Aorta (tissue), 5 donors: ENCODE measurements at regions of chr18 and their contacts with region 1.

Region 1: DNA sequence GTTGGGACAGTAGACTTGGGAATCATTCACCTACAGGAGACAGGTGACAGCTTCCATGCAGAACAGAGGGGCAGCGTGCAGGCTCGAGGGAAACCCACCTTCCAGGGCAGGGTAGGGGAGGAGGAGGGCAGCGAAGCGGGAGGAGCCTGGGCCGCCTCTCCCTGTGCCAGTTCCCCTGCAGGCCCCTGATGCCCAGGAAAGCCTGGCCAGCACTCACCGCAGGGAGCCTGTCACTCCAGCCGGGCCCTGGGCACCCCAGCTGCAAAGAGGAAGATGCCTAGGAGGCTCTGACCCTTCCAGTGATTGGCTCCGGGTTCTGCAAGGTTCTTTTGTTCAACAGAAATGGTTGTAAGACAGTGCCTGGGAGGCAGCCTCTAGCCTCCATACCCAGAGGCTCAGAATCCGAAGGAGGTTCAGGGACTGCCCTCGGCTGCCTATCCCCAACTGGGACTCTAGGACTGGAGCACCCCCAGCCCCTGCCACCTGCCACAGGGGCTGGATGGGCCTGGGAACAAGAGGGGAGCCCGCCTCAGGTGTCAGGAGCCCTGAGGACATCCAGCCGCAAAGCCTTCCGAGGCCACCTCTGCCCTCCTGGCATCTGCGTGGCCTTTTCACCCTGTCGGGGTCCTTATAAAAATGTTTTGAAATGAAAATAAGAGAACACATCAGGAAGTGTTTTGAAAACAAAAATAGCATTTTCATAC is 103.2 kb downstream of the PTGR3 start:
- DNase-seq: no peak
- ATAC-seq: no peak
- H3K4me3 ChIP-seq: no peak overlapping the region
- H3K27ac ChIP-seq: no peak overlapping the region
- H3K4me1 ChIP-seq: no peaks in the 10 kb centered on the region
- H3K27me3 ChIP-seq: no peaks in the 10 kb centered on the region

Region 2: GRCh38 chr18:75125382-75126331 is 20.0 kb after region 1 on chr18:
- intact Hi-C with region 1: no loop called
- DNase-seq: no peak
- ATAC-seq: peak; percentile 23
- H3K4me3 ChIP-seq: no peak overlapping the region
- H3K27ac ChIP-seq: no peak overlapping the region
- H3K4me1 ChIP-seq: no peaks in the 10 kb centered on the region
- H3K27me3 ChIP-seq: no peaks in the 10 kb centered on the region

Region 3: DNA sequence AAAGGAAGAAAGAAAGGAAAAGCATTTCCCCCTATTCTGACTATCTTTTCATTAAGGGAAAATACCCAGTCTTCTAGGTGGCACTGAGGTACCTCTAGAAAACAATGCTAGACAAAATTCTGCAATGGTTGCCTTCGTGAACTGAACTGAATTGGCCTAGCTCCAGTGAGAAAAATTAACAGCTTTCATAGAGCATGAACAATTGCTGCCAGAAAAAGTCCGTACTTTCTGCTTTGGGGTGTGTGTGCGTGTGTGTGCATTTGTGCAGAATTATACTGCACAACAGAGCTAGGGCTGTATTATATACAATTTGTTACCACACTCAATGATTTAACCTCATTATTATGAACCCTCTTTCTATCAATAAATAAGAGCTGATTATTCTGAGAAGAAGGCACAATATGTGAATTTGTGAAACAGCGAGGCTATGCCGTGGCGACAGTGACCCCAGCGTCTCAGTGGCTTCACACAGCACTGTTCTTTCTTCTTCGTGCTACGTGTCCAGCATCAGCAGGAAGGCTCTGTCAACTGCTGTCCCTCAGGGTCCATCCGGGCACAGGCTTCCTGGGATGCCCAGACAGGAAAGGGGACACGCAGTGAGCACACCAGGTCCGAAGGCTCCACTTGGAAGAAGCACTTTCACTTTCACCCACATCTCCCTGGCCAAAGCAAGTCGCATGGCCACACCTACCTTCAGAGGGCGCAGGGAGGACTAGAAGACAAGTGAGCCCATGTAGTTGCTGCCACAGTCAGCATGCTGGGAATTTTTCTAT is 55.7 kb after region 1 on chr18:
- intact Hi-C with region 1: loop called in 1 of 2 experiments (anchors 10 kb)
- DNase-seq: no peak
- ATAC-seq: no peak
- H3K4me3 ChIP-seq: no peak overlapping the region
- H3K27ac ChIP-seq: no peak overlapping the region
- H3K4me1 ChIP-seq: no peaks in the 10 kb centered on the region
- H3K27me3 ChIP-seq: no peaks in the 10 kb centered on the region